ENCODE measurements at regions of chr2 and their contacts with region 1.

Region 1: DNA sequence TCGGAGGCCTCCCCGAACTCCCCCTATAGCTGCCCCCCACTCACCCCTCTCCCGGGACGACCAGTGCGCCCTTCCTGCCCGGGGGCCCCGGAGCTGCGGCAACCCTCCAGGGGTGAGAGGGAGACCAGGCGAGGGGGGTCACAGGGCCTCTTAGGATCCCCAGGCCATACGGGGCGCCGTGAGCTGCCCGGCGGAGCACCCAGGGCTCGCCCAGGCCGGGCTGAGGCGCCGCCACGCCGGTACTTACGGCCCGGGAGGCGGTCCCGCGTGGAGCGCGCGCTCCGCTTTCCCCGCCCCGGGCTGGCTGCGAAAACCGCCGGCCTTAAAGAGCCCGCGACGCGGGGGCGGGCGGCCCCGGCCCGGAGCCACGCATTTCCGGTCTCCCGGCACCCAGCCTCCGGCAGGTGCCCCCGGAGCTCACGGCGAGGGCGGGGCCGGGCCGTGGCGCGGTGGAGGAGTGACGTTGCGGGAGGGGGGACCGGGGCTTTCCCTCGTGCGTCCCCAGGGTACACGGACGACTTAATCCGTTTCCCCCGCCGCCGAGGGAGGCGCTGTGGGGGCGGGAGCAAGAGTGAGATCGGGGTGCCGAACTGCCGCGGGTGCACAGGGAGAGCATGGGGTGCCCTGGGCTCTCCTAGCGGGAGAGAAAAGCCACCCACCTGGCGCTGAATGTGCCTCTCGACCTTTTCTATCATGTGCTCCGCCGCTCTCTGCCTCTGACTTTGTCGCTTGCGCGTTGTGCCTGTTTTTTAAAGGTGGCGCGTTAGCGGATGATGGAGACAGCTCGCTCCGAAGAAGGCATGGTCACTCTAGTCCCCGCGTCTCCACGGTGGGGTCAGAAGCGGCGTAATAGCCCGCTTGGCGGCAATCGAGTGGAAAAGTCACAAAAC is at the start of gene METTL21A:
- DNase-seq: peak; percentile 96 to 97 (median 97)
- H3K4me3 ChIP-seq: peak within 1 kb of the TSS; percentile 89 to 90
- H3K4me3 Mint-ChIP-seq: peak within 1 kb of the TSS; percentile 94 to 96 (median 95)
- H3K27ac ChIP-seq: peak within 1 kb of the TSS; percentile 97
- H3K27ac Mint-ChIP-seq: peak within 1 kb of the TSS; percentile 92 to 99 (median 97)
- H3K4me1 ChIP-seq: peaks cover 31% of the 10 kb centered on the region
- H3K4me1 Mint-ChIP-seq: peaks cover 16 to 46% (median 31%) of the 10 kb centered on the region in 4 donors
- H3K27me3 ChIP-seq: no peaks in the 10 kb centered on the region
- H3K27me3 Mint-ChIP-seq: no peaks in the 10 kb centered on the region
- total RNA-seq, gene METTL21A: 16.6 to 16.9 TPM

Region 2: DNA sequence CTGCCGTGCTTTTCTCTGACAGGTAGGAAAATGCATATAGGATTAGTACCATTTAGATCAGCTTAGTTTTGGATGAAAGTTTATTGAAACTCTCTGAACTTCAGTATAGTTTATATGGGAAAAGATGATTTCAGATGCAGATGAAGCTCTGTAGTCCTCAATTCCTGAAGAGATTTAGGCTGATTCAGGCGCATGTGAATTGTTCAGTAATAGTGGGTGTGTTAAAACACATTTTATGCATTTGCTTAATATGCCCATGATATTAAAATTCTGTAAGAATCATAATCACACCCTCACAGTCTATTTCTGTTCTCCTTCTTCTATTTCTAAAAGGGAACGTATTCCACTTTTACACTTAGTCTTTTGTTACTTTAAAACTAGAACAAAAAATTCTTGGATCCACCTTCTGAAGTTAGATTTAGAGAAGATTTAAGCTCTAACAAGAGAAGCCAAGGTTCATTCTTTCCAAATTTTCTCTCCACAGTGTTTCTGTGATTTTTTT is 1027.5 kb before region 1 on chr2:
- CTCF ChIA-PET with region 1: no interaction called
- POLR2A ChIA-PET with region 1: no interaction called
- intact Hi-C with region 1: no loop called
- DNase-seq: no peak
- H3K4me3 ChIP-seq: no peak overlapping the region
- H3K4me3 Mint-ChIP-seq: no peak overlapping the region
- H3K27ac ChIP-seq: no peak overlapping the region
- H3K27ac Mint-ChIP-seq: no peak overlapping the region
- H3K4me1 ChIP-seq: no peaks in the 10 kb centered on the region
- H3K4me1 Mint-ChIP-seq: peaks cover 5 to 6% (median 5%) of the 10 kb centered on the region in 4 donors
- H3K27me3 ChIP-seq: no peaks in the 10 kb centered on the region
- H3K27me3 Mint-ChIP-seq: peaks cover 1% of the 10 kb centered on the region in 2 donors

Region 3: GRCh38 chr2:206765242-206766056 is 859.8 kb before region 1 on chr2 and contains the starts of genes FASTKD2 and MDH1B:
- CTCF ChIA-PET with region 1: interaction called, 5 read pairs
- POLR2A ChIA-PET with region 1: interaction called, 5 read pairs
- intact Hi-C with region 1: loop called (anchors 1 kb)
- DNase-seq: peak; percentile 88 to 91 (median 89)
- H3K4me3 ChIP-seq: peak within 1 kb of the TSS; percentile 54 to 82
- H3K4me3 Mint-ChIP-seq: peak within 1 kb of the TSS; percentile 89 to 98 (median 95)
- H3K27ac ChIP-seq: peak within 1 kb of the TSS; percentile 91
- H3K27ac Mint-ChIP-seq: peak within 1 kb of the TSS; percentile 96 to 99 (median 97)
- H3K4me1 ChIP-seq: peaks cover 39% of the 10 kb centered on the region
- H3K4me1 Mint-ChIP-seq: peaks cover 20 to 45% (median 36%) of the 10 kb centered on the region in 4 donors
- H3K27me3 ChIP-seq: no peaks in the 10 kb centered on the region
- H3K27me3 Mint-ChIP-seq: no peaks in the 10 kb centered on the region
- total RNA-seq, gene FASTKD2: 23.0 to 23.4 TPM
- total RNA-seq, gene MDH1B: 0.17 TPM in 1 of 2 experiments, not detected in the other

Region 4: DNA sequence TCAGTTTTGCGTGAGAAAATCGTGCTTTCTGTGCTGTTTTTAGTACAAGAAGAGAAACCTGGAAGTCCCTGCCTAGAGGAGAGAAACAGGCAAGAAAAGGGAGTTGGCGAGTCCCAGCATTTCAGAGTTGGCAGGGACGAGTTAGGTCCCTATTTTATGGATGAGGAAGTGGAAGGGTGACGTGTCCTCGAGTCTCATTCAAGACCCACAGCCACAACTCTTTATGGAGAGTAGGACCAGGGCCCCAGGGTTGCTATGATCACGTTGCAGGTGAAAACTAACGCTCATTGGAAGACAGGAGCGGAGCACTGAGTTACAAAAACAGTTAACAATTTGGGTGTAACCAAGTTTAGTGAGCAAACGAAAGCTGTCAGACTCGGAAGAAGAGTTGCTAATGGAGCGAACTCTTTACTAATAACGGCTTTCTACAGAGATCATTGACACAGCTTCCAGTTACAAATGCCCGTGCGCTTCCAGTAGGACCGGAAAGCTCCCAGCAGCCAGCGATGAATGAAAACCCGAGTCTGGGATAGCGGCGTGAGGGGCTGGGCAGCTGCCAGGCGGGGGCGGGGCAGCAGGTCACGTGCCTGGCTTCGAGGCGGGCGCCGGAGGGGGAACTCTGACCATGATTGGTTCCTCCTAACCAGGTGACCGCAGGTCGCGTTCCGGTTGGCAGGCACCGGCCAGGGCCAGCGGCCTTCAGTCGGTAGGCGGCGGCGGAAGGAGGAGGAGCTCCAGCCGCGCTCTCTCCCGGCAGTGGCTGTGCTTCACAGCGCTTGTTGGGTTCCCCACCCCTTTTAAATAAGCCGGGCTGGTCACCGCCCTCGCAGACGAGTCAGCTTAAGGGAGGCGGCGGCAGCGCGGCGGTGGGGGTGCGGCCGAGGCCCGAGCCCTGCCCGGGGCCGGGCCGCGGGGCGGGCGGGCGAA is 85.8 kb after region 1 on chr2 and contains the start of gene CCNYL1:
- CTCF ChIA-PET with region 1: interaction called, 34 read pairs
- POLR2A ChIA-PET with region 1: interaction called, 52 read pairs
- intact Hi-C with region 1: loop called (anchors 1 kb)
- DNase-seq: peak; percentile 96 to 99 (median 98)
- H3K4me3 ChIP-seq: peak within 1 kb of the TSS; percentile 70 to 88
- H3K4me3 Mint-ChIP-seq: peak within 1 kb of the TSS; percentile 90 to 98 (median 96)
- H3K27ac ChIP-seq: peak within 1 kb of the TSS; percentile 73
- H3K27ac Mint-ChIP-seq: peak within 1 kb of the TSS; percentile 92 to 96 (median 94)
- H3K4me1 ChIP-seq: peaks cover 20% of the 10 kb centered on the region
- H3K4me1 Mint-ChIP-seq: peaks cover 14 to 37% (median 21%) of the 10 kb centered on the region in 4 donors
- H3K27me3 ChIP-seq: no peaks in the 10 kb centered on the region
- H3K27me3 Mint-ChIP-seq: peaks cover 0 to 1% of the 10 kb centered on the region in 2 donors
- total RNA-seq, gene CCNYL1: 9.7 to 10.5 TPM

Region 5: GRCh38 chr2:207769597-207770486 is 144.6 kb after region 1 on chr2 and contains the start of gene FZD5:
- CTCF ChIA-PET with region 1: interaction called, 3 read pairs
- POLR2A ChIA-PET with region 1: interaction called, 5 read pairs
- intact Hi-C with region 1: loop called (anchors 1 kb)
- DNase-seq: peak; percentile 49 to 74 (median 53)
- H3K4me3 ChIP-seq: peak within 1 kb of the TSS; percentile 36 to 70
- H3K4me3 Mint-ChIP-seq: peak within 1 kb of the TSS; percentile 88 to 97 (median 96)
- H3K27ac ChIP-seq: no peak within 1 kb of the TSS
- H3K27ac Mint-ChIP-seq: peak within 1 kb of the TSS in 6 of 7 donors; percentile 57 to 86 (median 74)
- H3K4me1 ChIP-seq: peaks cover 41% of the 10 kb centered on the region
- H3K4me1 Mint-ChIP-seq: peaks cover 13 to 40% (median 22%) of the 10 kb centered on the region in 4 donors
- H3K27me3 ChIP-seq: peaks cover 9% of the 10 kb centered on the region
- H3K27me3 Mint-ChIP-seq: peaks cover 10 to 16% of the 10 kb centered on the region in 2 donors
- total RNA-seq, gene FZD5: 0.33 to 0.38 TPM

Region 6: GRCh38 chr2:208025037-208025813 is 400.0 kb after region 1 on chr2 and contains the start of gene PLEKHM3:
- CTCF ChIA-PET with region 1: interaction called, 5 read pairs
- POLR2A ChIA-PET with region 1: interaction called, 31 read pairs
- intact Hi-C with region 1: loop called (anchors 1 kb)
- DNase-seq: peak; percentile 43 to 69 (median 61)
- H3K4me3 ChIP-seq: peak within 1 kb of the TSS; percentile 83 to 92
- H3K4me3 Mint-ChIP-seq: peak within 1 kb of the TSS; percentile 90 to 98 (median 93)
- H3K27ac ChIP-seq: peak within 1 kb of the TSS; percentile 71
- H3K27ac Mint-ChIP-seq: peak within 1 kb of the TSS; percentile 45 to 96 (median 95)
- H3K4me1 ChIP-seq: peaks cover 14% of the 10 kb centered on the region
- H3K4me1 Mint-ChIP-seq: peaks cover 14 to 28% (median 19%) of the 10 kb centered on the region in 4 donors
- H3K27me3 ChIP-seq: no peaks in the 10 kb centered on the region
- H3K27me3 Mint-ChIP-seq: no peaks in the 10 kb centered on the region
- total RNA-seq, gene PLEKHM3: 14.7 to 16.1 TPM

Region 7: GRCh38 chr2:208072250-208072892 is 447.1 kb after region 1 on chr2:
- CTCF ChIA-PET with region 1: interaction called, 11 read pairs
- POLR2A ChIA-PET with region 1: interaction called, 3 read pairs
- intact Hi-C with region 1: loop called (anchors 1 kb)
- DNase-seq: peak; percentile 43 to 55 (median 47)
- H3K4me3 ChIP-seq: no peak overlapping the region
- H3K4me3 Mint-ChIP-seq: no peak overlapping the region
- H3K27ac ChIP-seq: no peak overlapping the region
- H3K27ac Mint-ChIP-seq: no peak overlapping the region
- H3K4me1 ChIP-seq: no peaks in the 10 kb centered on the region
- H3K4me1 Mint-ChIP-seq: no peaks in the 10 kb centered on the region
- H3K27me3 ChIP-seq: peaks cover 4% of the 10 kb centered on the region
- H3K27me3 Mint-ChIP-seq: peaks cover 7 to 16% of the 10 kb centered on the region in 2 donors

Region 8: GRCh38 chr2:208254871-208255556 is 629.8 kb after region 1 on chr2 and contains the start of gene IDH1:
- CTCF ChIA-PET with region 1: no interaction called
- POLR2A ChIA-PET with region 1: no interaction called
- intact Hi-C with region 1: no loop called
- DNase-seq: peak; percentile 85 to 92 (median 88)
- H3K4me3 ChIP-seq: peak within 1 kb of the TSS; percentile 91 to 92
- H3K4me3 Mint-ChIP-seq: peak within 1 kb of the TSS; percentile 93 to 100 (median 98)
- H3K27ac ChIP-seq: peak within 1 kb of the TSS; percentile 43
- H3K27ac Mint-ChIP-seq: peak within 1 kb of the TSS; percentile 79 to 94 (median 86)
- H3K4me1 ChIP-seq: peaks cover 14% of the 10 kb centered on the region
- H3K4me1 Mint-ChIP-seq: peaks cover 12 to 32% (median 18%) of the 10 kb centered on the region in 4 donors
- H3K27me3 ChIP-seq: no peaks in the 10 kb centered on the region
- H3K27me3 Mint-ChIP-seq: no peaks in the 10 kb centered on the region
- total RNA-seq, gene IDH1: 25.6 to 25.9 TPM